BJ (cell line): ENCODE measurements at regions of chr4 and their contacts with region 1.

Region 1: DNA sequence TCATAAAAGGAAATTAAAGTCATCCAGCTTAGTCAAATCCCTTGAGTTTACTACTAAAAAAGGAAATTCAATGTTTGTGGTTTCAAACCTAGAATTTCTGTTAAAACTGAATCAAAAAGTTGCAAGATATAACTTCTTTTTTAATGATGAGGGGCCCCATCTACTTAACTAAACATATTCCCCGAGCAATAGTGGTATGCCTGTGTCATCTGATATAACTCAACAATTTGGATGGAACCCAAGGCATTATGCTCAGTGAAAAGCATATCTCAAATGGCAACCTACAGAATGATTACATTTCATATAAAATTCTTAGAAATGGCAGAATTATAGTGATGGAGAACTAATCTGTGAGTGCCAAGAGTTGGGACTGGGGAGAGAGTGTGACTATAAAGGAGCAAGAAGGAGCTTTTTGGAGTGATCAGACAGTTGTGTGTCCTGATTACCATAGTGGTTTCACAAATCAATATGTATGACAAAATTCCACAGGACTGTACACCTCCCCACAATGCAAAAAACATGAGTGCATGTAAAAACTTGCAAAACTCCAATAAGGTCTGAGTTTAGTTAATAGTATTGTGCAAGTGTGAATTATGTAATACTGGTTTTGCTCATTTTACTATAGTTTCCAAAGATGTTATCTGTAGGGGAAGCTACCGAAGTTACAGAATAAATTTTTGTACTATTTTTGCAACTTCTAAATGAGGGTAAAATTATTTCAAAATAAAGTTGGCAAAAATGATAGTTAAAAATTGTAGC is 323.2 kb downstream of the ARHGAP24 start:
- DNase-seq: no peak
- H3K4me3 ChIP-seq: no peak overlapping the region
- H3K27me3 ChIP-seq: no peaks in the 10 kb centered on the region
- CTCF ChIP-seq: no peak

Region 2: GRCh38 chr4:85761803-85762528 is 36.2 kb before region 1 on chr4:
- CTCF ChIA-PET with region 1: interaction called, 10 read pairs
- POLR2A ChIA-PET with region 1: no interaction called
- DNase-seq: no peak
- H3K4me3 ChIP-seq: no peak overlapping the region
- H3K27me3 ChIP-seq: no peaks in the 10 kb centered on the region
- CTCF ChIP-seq: no peak

Region 3: DNA sequence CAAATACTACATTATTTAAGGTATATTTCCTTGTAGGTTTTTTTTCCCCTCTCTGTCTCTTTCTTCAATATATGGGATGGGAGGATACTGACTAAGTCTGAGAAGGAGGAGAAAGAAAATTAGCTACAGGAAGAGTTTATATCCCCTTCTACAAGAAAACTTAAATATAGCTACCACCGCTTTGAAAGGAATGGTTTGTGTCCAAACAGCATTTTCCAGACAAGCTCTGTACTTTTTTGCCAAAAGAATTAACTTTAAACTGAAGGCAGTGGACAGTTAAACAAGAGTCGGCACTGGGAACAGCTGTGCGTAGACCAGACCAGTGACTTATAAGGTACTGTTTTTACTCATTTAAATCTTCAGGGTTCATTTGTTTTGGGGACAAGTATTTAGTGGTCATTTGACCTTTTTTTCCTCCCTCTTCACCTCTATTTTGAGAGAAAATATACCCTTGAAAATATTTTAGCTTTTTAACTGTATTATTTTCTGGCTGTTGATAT is 19.5 kb before region 1 on chr4:
- CTCF ChIA-PET with region 1: interaction called, 11 read pairs
- POLR2A ChIA-PET with region 1: no interaction called
- DNase-seq: no peak
- H3K4me3 ChIP-seq: peak overlapping the region; percentile 45
- H3K27me3 ChIP-seq: no peaks in the 10 kb centered on the region
- CTCF ChIP-seq: no peak

Region 4: DNA sequence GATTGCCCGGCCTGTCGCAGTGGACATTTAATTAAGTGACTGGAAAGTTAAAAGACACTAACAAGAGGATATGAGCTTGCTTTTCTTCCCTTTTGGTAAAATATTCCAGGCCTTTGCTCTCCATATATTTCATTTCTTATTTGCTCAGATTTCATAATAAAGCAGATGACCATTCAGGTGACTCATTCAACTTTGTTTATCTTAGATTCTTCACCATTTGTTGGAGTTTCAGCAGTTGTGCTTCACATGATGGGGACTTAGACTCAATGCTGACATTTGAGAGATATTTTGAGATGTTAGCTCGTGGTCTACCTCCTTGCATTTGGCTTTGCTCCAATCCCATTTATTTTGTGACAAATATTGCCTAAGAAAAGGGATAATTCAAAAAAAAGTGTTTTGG is 11.1 kb before region 1 on chr4:
- CTCF ChIA-PET with region 1: interaction called, 24 read pairs
- POLR2A ChIA-PET with region 1: no interaction called
- DNase-seq: peak; percentile 59
- H3K4me3 ChIP-seq: no peak overlapping the region
- H3K27me3 ChIP-seq: no peaks in the 10 kb centered on the region
- CTCF ChIP-seq: no peak

Region 5: DNA sequence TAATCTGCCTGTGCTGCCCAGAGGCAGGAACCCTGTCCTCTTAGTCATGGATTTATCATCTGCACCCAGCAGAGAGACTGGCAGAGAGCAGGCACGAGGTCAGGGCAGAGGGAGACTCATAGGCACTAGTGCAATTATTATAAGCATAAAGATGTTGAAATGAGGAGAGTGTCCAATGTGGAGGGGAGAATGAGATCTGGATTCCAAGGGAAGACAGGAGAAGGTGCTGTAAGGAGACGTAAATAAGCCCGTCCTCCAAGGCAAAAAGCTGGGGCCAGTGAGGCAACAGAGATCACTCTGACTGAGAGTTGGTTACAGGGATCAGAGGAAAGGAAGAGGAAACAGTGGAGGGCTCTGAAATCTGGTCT is 155.4 kb after region 1 on chr4:
- CTCF ChIA-PET with region 1: interaction called, 17 read pairs
- POLR2A ChIA-PET with region 1: no interaction called
- DNase-seq: no peak
- H3K4me3 ChIP-seq: no peak overlapping the region
- H3K27me3 ChIP-seq: no peaks in the 10 kb centered on the region
- CTCF ChIP-seq: no peak

Region 6: GRCh38 chr4:85968945-85969819 is 171.0 kb after region 1 on chr4:
- CTCF ChIA-PET with region 1: interaction called, 31 read pairs
- POLR2A ChIA-PET with region 1: no interaction called
- DNase-seq: no peak
- H3K4me3 ChIP-seq: no peak overlapping the region
- H3K27me3 ChIP-seq: no peaks in the 10 kb centered on the region
- CTCF ChIP-seq: peak; percentile 52

Region 7: GRCh38 chr4:86043755-86044592 is 245.8 kb after region 1 on chr4:
- CTCF ChIA-PET with region 1: interaction called, 10 read pairs
- POLR2A ChIA-PET with region 1: no interaction called
- DNase-seq: no peak
- H3K4me3 ChIP-seq: no peak overlapping the region
- H3K27me3 ChIP-seq: no peaks in the 10 kb centered on the region
- CTCF ChIP-seq: peak; percentile 57

Region 8: GRCh38 chr4:86261636-86262035 is 463.4 kb after region 1 on chr4:
- CTCF ChIA-PET with region 1: no interaction called
- POLR2A ChIA-PET with region 1: no interaction called
- DNase-seq: no peak
- H3K4me3 ChIP-seq: no peak overlapping the region
- H3K27me3 ChIP-seq: no peaks in the 10 kb centered on the region
- CTCF ChIP-seq: no peak